AG04449 (cell line): ENCODE measurements at regions of chr17 and their contacts with region 1.

Region 1: GRCh38 chr17:41695954-41696756 is 7.5 kb downstream of the EIF1 start:
- DNase-seq: no peak
- H3K4me3 ChIP-seq: no peak overlapping the region
- CTCF ChIP-seq: peak; percentile 65

Region 2: DNA sequence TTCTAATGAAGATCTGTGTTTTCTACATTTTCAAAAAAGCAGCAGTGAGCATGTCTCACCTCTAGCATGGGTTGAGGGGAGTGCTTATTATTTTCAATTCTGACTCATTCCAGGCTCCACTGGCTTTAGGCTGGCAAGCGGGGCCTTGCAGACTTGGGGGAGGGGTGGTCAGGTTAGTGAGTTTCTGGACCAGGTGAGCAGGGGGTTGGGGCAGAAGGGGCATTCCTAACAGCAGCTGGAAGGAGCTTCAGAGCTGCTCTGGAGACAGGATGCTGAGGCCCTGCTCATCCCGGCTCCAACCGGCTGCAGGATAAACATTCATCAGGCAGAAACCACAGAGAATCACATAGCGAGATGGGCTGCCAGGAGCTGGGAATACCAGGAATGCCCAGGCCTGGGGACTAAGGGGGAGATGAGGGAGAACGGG is 157.6 kb before region 1 on chr17:
- CTCF ChIA-PET with region 1: no interaction called
- POLR2A ChIA-PET with region 1: no interaction called
- DNase-seq: no peak
- H3K4me3 ChIP-seq: no peak overlapping the region
- CTCF ChIP-seq: no peak

Region 3: DNA sequence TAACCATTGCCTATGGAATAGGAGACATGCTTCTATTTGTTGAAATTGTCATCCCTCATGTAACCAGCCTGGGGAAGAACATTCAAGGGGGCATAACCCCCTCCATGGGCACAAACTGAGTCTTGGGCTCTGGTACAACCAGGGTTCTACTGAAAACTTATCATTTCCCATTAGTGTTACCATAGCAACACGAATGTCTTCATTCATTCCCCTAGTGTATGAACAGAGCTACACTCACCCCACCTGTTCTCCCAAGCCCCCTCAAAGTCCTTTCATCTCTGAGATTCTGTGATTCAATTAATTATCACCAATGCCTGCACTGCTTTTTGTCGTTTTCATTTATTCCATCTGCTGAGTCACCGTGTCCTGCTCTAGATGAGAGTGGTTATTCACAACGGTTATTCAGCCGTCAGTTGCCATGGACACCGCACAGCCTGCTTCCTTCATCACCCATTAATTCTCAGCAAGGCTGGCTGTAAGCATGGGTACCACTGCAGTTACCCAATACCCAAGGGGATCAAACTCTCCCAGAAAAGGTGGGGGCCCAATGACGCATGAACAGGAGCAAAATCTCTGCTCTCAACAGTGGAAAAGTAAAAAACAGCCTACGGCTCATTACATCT is 14.4 kb after region 1 on chr17:
- CTCF ChIA-PET with region 1: interaction called, 114 read pairs
- POLR2A ChIA-PET with region 1: interaction called, 5 read pairs
- DNase-seq: no peak
- H3K4me3 ChIP-seq: no peak overlapping the region
- CTCF ChIP-seq: no peak

Region 4: DNA sequence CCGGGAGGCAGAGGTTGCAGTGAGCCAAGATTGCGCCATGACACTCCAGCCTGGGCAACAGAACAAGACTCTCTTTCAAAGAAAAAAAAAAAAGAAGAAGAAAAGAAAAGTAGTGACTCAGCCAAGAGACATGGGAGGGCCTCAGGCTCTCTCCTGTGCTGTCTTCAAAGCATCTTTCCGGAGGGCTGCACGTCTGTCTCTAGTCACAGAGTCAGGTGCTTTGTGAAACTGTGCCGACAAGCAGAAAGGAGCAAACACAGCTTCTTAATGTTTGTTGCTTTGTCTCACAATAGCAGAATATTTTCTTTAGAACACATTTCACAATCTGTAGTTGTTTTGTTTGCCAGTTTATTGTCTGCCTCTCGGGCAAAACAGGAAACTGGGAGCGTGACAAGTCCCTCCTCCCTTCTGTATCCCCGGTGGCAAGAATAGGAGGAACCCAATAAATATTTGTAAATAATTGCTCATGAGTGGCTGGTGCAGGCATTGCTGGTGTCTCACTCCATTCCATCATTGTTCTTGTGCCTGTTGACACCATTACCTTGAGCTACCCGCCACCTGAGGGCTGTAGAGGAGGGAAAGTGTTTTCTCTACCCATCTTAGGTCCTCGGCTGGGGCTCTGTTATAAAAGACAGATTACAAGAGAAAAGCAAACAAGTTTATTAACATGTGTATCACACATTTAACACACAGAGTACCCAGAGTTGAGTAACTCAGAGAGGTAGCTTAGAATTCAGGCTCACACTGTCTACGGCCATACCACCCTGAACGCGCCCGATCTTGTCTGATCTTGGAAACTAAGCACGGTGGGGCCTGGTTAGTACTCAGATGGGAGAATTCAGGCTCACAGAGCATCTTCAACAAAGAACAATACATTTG is 21.5 kb after region 1 on chr17:
- CTCF ChIA-PET with region 1: interaction called, 114 read pairs
- POLR2A ChIA-PET with region 1: interaction called, 4 read pairs
- DNase-seq: no peak
- H3K4me3 ChIP-seq: no peak overlapping the region
- CTCF ChIP-seq: no peak

Region 5: DNA sequence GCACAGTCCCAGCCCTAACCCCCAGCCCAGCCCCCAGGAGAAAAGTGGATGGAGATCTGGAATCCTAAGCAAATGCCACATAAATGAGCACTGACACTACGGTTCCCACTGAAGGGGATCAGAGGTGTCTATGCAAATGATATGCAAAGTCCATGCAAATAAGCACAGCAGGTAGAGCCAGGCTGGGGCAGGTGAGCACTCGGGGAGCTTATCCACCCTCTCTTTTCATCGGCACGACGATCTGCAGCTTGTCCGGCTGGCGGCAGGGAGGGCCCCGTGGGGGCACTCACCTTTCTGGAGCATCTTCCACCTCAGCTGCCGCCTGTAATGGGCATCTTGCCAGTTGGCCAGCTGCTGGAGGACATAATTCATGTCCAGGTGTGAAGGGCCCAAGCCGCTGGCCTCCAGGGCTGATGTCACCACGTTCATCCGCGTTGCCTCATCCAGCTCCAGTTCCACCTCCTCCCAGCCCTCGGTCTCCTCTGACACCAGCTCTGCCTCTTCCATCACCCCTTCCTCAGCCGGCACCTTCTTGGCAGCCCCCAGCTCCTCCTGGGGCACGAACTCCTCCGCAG is 28.4 kb after region 1 on chr17:
- CTCF ChIA-PET with region 1: interaction called, 10 read pairs
- POLR2A ChIA-PET with region 1: no interaction called
- DNase-seq: no peak
- H3K4me3 ChIP-seq: no peak overlapping the region
- CTCF ChIP-seq: no peak